Thyroid gland (tissue), 4 donors: ENCODE measurements at regions of chr20 and their contacts with region 1.

Region 1: GRCh38 chr20:62010551-62011402 is 54.9 kb downstream of the TAF4 start:
- DNase-seq: peak; percentile 39 to 45
- H3K4me3 ChIP-seq: no peak overlapping the region
- H3K27ac ChIP-seq: no peak overlapping the region
- H3K4me1 ChIP-seq: no peaks in the 10 kb centered on the region
- H3K27me3 ChIP-seq: no peaks in the 10 kb centered on the region
- CTCF ChIP-seq: peak in 4 of 6 experiments; percentile 49 to 67 (median 62)
- POLR2A ChIP-seq: no peak

Region 2: GRCh38 chr20:61912665-61913422 is 97.9 kb before region 1 on chr20:
- intact Hi-C with region 1: no loop called
- DNase-seq: no peak
- H3K4me3 ChIP-seq: no peak overlapping the region
- H3K27ac ChIP-seq: no peak overlapping the region
- H3K4me1 ChIP-seq: no peaks in the 10 kb centered on the region
- H3K27me3 ChIP-seq: no peaks in the 10 kb centered on the region
- CTCF ChIP-seq: no peak
- POLR2A ChIP-seq: no peak

Region 3: DNA sequence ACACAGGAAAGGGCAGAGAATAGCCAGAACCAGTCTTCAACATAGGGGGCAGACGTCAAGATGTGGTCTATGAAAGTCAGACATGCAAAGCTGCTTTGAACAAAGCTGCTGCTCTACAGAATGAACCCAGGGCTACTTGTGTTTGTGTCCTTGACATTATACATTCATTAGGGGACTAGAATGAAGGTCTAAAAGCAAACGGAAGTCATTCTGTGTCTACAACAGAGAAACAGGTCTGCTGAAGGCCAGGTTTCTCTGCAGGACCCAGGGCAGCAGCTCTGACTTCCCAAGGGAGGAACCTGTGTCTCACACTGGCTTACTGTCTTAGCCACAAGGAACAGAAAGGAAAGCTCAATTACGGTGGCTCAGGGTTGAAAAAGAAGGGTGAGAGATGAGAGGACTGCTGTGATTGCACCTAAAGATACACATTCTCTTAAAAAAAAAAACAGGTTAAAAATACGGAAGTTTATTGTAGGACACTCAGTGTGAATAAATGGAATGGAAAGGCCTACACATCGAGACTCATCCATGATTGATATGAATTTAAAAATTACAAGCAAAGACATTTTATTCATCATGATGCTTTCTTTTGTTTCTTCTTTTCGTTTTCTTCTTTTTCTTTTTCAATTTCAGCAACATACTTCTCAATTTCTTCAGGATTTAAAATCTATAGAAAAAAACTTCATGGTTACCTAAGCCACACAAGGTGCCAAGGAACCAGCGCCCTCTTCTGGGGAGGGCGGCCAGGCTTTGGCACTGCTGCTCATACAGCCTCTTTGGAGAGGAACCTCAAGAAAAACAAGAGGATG is 125.7 kb after region 1 on chr20:
- intact Hi-C with region 1: loop called (anchors 5 kb)
- DNase-seq: peak; percentile 78 to 79
- H3K4me3 ChIP-seq: no peak overlapping the region
- H3K27ac ChIP-seq: no peak overlapping the region
- H3K4me1 ChIP-seq: peaks cover 8 to 21% of the 10 kb centered on the region in 2 donors
- H3K27me3 ChIP-seq: no peaks in the 10 kb centered on the region
- CTCF ChIP-seq: peak; percentile 21 to 75 (median 58)
- POLR2A ChIP-seq: no peak